ENCODE measurements at regions of chr9 and their contacts with region 1.

Region 1: DNA sequence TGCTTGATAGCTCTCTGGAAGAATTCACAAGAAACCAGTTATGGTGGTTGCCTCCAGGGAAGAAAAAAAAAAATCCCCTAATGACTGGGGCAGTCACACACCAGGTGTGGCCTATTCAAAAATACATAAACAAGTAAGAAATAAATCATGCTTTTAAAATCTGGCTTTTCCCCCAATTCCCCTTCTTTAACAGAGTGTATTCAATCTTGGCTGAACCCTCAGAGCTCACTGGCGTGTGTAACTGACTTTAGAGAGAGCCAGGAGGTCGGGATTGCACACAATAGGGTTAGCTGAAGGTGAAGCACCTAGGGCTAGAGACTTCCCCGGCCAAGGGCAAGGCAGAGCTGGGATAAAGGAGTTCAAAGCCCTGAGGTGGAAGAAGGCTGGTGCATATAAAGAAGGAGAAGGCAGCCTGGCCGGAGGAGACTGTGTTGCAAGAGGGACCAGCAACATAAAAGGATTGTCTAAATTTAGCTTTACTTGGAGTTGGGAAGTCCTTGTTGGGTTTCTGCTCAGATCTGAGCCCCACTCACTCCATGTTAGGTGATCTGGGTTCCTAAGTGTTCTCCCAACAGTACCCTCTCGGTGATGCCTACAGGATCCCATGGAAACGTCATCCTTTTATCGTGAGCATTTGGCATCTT is 19.7 kb downstream of the FNBP1 start:
- DNase-seq: peak; percentile 85
- ATAC-seq: peak; percentile 35
- H3K4me3 ChIP-seq: peak overlapping the region; percentile 7; the same call in 1 of the 2 replicates
- H3K27ac ChIP-seq: peak overlapping the region; percentile 89
- H3K4me1 ChIP-seq: peaks cover 71% of the 10 kb centered on the region
- H3K27me3 ChIP-seq: no peaks in the 10 kb centered on the region
- CTCF ChIP-seq: no peak

Region 2: GRCh38 chr9:129392001-129392541 is 631.2 kb before region 1 on chr9:
- CTCF ChIA-PET with region 1: no interaction called
- POLR2A ChIA-PET with region 1: no interaction called
- intact Hi-C with region 1: no loop called
- DNase-seq: no peak
- ATAC-seq: no peak
- H3K4me3 ChIP-seq: no peak overlapping the region
- H3K27ac ChIP-seq: no peak overlapping the region
- H3K4me1 ChIP-seq: no peaks in the 10 kb centered on the region
- H3K27me3 ChIP-seq: no peaks in the 10 kb centered on the region
- CTCF ChIP-seq: no peak

Region 3: DNA sequence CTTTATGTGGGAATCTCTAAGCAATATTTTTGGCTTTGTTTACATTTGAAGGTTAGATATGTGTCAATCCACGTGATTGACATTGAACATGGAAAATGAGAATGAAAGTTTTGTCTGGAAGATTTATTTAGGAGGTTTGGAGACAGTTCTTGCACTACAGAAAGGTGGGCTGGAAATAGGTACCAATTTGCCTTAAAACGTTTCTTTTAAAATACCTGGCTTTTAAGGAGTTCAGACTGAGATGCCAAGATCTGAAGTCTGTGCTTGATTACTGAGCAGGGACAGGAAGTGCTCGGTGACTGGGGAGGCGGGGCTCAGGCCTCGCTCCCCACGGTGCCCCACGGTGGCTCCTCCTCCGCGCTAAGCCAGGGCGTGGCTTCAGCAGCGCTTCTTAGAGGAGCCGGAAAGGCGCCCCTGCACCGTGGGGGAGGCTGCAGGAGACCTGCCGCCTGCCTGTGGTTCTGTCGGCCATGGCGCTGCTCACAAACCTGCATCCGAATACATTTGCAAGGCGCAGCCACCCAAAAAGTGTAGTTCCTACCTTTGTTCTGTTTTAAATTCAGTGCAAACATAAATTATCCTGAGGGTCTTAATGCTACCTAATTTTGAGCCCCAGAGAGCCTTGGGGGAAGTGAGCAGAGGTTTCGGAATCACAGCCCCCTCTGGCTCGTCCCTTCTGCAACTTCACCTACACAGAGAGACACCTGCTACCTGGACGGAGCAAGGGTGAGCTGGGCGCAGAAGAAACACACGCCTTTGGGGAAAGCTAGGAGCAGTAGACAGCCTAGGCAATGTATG is 138.8 kb before region 1 on chr9:
- CTCF ChIA-PET with region 1: no interaction called
- POLR2A ChIA-PET with region 1: no interaction called
- intact Hi-C with region 1: no loop called
- DNase-seq: peak; percentile 87
- ATAC-seq: peak; percentile 82
- H3K4me3 ChIP-seq: peak overlapping the region; percentile 57
- H3K27ac ChIP-seq: no peak overlapping the region
- H3K4me1 ChIP-seq: peaks cover 24% of the 10 kb centered on the region
- H3K27me3 ChIP-seq: no peaks in the 10 kb centered on the region
- CTCF ChIP-seq: no peak

Region 4: GRCh38 chr9:129962889-129963703 is 60.2 kb before region 1 on chr9:
- CTCF ChIA-PET with region 1: no interaction called
- POLR2A ChIA-PET with region 1: interaction called, 17 read pairs
- intact Hi-C with region 1: loop called (anchors 1 kb)
- DNase-seq: peak; percentile 45
- ATAC-seq: peak; percentile 79
- H3K4me3 ChIP-seq: peak overlapping the region; percentile 75
- H3K27ac ChIP-seq: peak overlapping the region; percentile 14
- H3K4me1 ChIP-seq: peaks cover 29% of the 10 kb centered on the region
- H3K27me3 ChIP-seq: no peaks in the 10 kb centered on the region
- CTCF ChIP-seq: no peak

Region 5: DNA sequence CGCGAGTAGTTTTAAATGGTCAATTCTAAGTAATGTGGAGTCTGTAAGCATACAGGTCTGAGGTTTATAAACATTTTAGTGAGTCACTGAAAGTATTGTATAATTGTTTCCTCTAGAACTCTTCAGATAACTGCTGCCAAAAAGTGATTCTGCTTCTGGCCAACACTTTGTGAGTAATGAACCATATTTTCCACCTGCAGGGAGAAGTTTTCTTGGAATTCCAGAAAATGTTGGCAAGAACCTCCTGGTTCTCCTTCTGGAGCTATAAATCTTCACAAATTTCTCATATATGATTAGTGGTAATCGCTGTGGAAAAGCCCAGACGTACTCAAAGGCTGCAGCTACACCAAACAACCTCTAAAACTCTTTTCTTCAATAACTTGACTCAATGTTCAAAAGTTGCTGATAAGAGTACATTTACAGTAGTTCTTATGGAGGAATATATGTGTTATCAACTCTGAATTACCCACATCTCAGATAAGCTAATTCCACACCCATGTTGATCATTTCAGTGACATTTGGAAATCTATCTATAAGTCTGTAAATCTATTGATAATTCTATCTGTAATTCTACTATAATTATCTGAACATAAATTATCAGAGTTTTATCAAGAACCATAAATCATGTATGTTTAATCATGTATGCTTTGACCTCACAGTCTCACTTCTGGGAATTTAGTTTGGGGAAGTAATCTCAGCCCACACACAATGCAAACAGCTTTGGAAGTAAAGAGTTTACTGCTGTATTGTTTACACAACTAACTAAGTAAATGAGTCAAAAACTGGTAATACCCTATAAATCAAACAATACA is 54.4 kb before region 1 on chr9:
- CTCF ChIA-PET with region 1: interaction called, 5 read pairs
- POLR2A ChIA-PET with region 1: interaction called, 17 read pairs
- intact Hi-C with region 1: loop called (anchors 1 kb)
- DNase-seq: peak; percentile 89
- ATAC-seq: peak; percentile 70
- H3K4me3 ChIP-seq: no peak overlapping the region
- H3K27ac ChIP-seq: peak overlapping the region; percentile 95
- H3K4me1 ChIP-seq: peaks cover 36% of the 10 kb centered on the region
- H3K27me3 ChIP-seq: no peaks in the 10 kb centered on the region
- CTCF ChIP-seq: no peak

Region 6: DNA sequence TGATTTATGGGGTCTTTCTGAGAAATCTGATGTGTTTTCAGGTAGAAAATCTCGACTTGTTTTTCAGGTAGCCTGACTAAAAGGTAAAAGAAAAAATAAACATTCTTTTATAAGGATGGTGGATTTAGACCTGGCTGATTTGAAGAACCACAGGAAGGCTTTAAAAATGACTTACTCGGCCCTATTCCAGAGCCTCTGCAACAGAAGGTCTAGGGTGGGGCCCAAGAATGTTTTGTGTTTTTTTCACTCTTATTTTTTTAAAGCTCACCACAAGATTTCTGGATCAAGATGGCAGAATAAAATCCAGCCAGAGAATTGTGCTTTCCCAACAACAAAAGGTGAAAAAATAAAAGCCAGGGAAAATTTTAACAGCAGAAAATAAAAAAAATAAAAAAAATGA is 39.4 kb before region 1 on chr9:
- CTCF ChIA-PET with region 1: no interaction called
- POLR2A ChIA-PET with region 1: no interaction called
- intact Hi-C with region 1: no loop called
- DNase-seq: peak; percentile 57
- ATAC-seq: peak; percentile 58; the same call in 1 of the 2 replicates
- H3K4me3 ChIP-seq: no peak overlapping the region
- H3K27ac ChIP-seq: no peak overlapping the region
- H3K4me1 ChIP-seq: peaks cover 12% of the 10 kb centered on the region
- H3K27me3 ChIP-seq: no peaks in the 10 kb centered on the region
- CTCF ChIP-seq: no peak

Region 7: GRCh38 chr9:129998491-129999140 is 24.6 kb before region 1 on chr9:
- CTCF ChIA-PET with region 1: no interaction called
- POLR2A ChIA-PET with region 1: no interaction called
- intact Hi-C with region 1: no loop called
- DNase-seq: no peak
- ATAC-seq: no peak
- H3K4me3 ChIP-seq: no peak overlapping the region
- H3K27ac ChIP-seq: no peak overlapping the region
- H3K4me1 ChIP-seq: peaks cover 17% of the 10 kb centered on the region
- H3K27me3 ChIP-seq: no peaks in the 10 kb centered on the region
- CTCF ChIP-seq: no peak

Region 8: DNA sequence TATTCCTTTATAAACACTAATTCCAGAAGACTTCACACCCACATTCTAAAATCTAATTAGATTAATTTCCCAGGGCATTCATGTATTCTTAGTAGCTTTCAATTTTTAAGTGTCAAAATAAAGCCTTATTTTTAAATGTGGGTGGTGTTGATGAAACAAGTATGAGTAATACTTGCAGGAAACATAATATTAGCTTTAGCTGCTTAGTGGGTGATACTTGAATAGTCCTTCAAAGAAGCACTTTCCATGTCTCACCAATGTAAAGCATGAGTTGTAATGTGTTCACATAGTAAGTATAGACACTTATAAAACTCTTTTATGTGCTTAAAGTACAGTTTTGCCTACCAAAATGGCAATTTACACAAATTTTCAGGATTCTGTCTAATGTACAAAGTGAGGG is 12.8 kb after region 1 on chr9:
- CTCF ChIA-PET with region 1: no interaction called
- POLR2A ChIA-PET with region 1: interaction called, 3 read pairs
- intact Hi-C with region 1: loop called (anchors 2 kb)
- DNase-seq: peak; percentile 66
- ATAC-seq: peak; percentile 92
- H3K4me3 ChIP-seq: no peak overlapping the region
- H3K27ac ChIP-seq: peak overlapping the region; percentile 61
- H3K4me1 ChIP-seq: peaks cover 31% of the 10 kb centered on the region
- H3K27me3 ChIP-seq: no peaks in the 10 kb centered on the region
- CTCF ChIP-seq: no peak